ENCODE measurements at regions of chr1 and their contacts with region 1.

Region 1: DNA sequence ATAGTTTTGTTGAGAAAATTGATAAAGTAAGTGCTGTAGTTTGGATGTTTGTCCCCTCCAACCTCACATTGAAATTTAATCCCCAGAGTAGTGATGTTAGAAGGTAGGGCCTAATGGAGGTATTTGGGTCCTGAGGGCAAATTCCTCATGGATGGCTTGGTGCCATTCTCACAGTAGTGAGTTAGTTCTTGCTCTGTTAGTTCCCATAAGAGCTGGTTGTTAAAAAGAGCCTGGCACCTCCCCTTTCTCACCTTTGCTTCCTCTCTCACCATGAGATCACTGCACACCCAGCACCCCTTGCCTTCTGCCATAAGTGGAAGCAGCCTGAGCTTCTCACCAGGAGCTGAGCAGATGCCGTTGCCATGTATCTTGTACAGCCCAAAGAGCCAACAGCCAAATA is 354.8 kb upstream of the NFIA start:
- DNase-seq: no peak
- ATAC-seq: no peak
- H3K4me3 ChIP-seq: no peak overlapping the region
- H3K27ac ChIP-seq: no peak overlapping the region
- H3K4me1 ChIP-seq: no peaks in the 10 kb centered on the region
- H3K27me3 ChIP-seq: no peaks in the 10 kb centered on the region
- CTCF ChIP-seq: no peak
- POLR2A ChIP-seq: no peak

Region 2: GRCh38 chr1:60329651-60330050 is 397.9 kb before region 1 on chr1:
- intact Hi-C with region 1: loop called in 1 of 10 experiments (anchors 5 kb)
- DNase-seq: no peak
- ATAC-seq: no peak
- H3K4me3 ChIP-seq: no peak overlapping the region
- H3K27ac ChIP-seq: no peak overlapping the region
- H3K4me1 ChIP-seq: no peaks in the 10 kb centered on the region
- H3K27me3 ChIP-seq: no peaks in the 10 kb centered on the region
- CTCF ChIP-seq: no peak
- POLR2A ChIP-seq: no peak

Region 3: DNA sequence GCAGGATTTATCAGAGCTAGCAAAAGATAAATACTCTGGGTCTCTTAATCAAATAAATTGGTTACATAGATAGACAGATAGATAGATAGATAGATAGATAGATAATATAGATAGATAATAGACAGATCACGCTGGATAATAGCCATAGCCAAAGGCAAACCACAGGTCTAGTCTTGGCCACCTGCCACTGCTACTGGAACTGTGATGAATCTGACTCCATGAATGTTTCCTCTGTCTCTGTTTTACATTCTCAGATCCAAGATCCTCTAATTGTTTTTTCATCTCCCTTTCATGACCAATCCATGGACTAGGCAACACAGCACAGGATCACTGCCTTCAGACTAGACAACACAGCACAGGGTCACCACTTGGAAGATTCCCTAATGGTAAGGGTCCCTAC is 89.9 kb before region 1 on chr1:
- intact Hi-C with region 1: loop called in 1 of 10 experiments (anchors 10 kb)
- DNase-seq: no peak
- ATAC-seq: no peak
- H3K4me3 ChIP-seq: no peak overlapping the region
- H3K27ac ChIP-seq: no peak overlapping the region
- H3K4me1 ChIP-seq: no peaks in the 10 kb centered on the region
- H3K27me3 ChIP-seq: no peaks in the 10 kb centered on the region
- CTCF ChIP-seq: no peak
- POLR2A ChIP-seq: no peak

Region 4: DNA sequence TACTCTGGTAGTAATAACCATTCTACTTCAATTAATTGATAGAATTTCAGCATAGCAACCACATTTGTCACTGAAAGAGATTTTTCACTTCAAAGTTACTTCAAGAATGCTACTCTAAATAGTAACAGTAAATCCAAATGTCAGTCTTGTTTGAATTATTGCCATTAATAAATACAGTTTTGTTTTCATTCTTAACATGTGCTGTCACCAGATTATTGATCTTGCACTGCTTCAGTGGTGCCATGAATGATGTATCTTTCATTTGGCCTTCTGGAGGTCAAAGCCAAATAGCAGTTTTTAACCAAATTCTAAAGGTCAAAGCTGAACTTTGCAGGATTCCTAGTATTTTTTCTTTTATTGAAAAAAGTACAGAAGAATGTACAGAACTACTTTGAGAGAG is 1214.2 kb after region 1 on chr1:
- intact Hi-C with region 1: no loop called
- DNase-seq: no peak
- ATAC-seq: no peak
- H3K4me3 ChIP-seq: no peak overlapping the region
- H3K27ac ChIP-seq: no peak overlapping the region
- H3K4me1 ChIP-seq: no peaks in the 10 kb centered on the region
- H3K27me3 ChIP-seq: no peaks in the 10 kb centered on the region
- CTCF ChIP-seq: no peak
- POLR2A ChIP-seq: no peak